Prostate gland (tissue), 2 donors: ENCODE measurements at regions of chr10 and their contacts with region 1.

Region 1: GRCh38 chr10:128081720-128082119 is 44.5 kb downstream of the MKI67 start:
- DNase-seq: no peak
- H3K4me3 ChIP-seq: no peak overlapping the region
- H3K27ac ChIP-seq: no peak overlapping the region
- H3K4me1 ChIP-seq: no peaks in the 10 kb centered on the region
- H3K27me3 ChIP-seq: no peaks in the 10 kb centered on the region
- CTCF ChIP-seq: no peak
- POLR2A ChIP-seq: no peak

Region 2: GRCh38 chr10:128147064-128147463 is 65.3 kb after region 1 on chr10:
- intact Hi-C with region 1: loop called (anchors 5 kb)
- DNase-seq: no peak
- H3K4me3 ChIP-seq: no peak overlapping the region
- H3K27ac ChIP-seq: no peak overlapping the region
- H3K4me1 ChIP-seq: no peaks in the 10 kb centered on the region
- H3K27me3 ChIP-seq: no peaks in the 10 kb centered on the region
- CTCF ChIP-seq: no peak
- POLR2A ChIP-seq: no peak